Activated CD4-positive, alpha-beta T cell treated with anti-CD3 and anti-CD28 coated beads for 36 hours (primary cell): ENCODE measurements at regions of chr16 and their contacts with region 1.

Region 1: GRCh38 chr16:50806099-50807062 is 64.5 kb downstream of the CYLD start:
- DNase-seq: peak; percentile 91
- ATAC-seq: peak; percentile 94
- H3K4me3 Mint-ChIP-seq: peak overlapping the region; percentile 56
- H3K27ac Mint-ChIP-seq: peak overlapping the region; percentile 55
- H3K4me1 Mint-ChIP-seq: peaks cover 12% of the 10 kb centered on the region
- H3K27me3 Mint-ChIP-seq: no peaks in the 10 kb centered on the region

Region 2: GRCh38 chr16:49776085-49776595 is 1030.2 kb before region 1 on chr16:
- CTCF ChIA-PET with region 1: no interaction called
- POLR2A ChIA-PET with region 1: no interaction called
- intact Hi-C with region 1: no loop called
- DNase-seq: no peak
- ATAC-seq: no peak
- H3K4me3 Mint-ChIP-seq: no peak overlapping the region
- H3K27ac Mint-ChIP-seq: no peak overlapping the region
- H3K4me1 Mint-ChIP-seq: no peaks in the 10 kb centered on the region
- H3K27me3 Mint-ChIP-seq: no peaks in the 10 kb centered on the region

Region 3: GRCh38 chr16:50210266-50211038 is 595.9 kb before region 1 on chr16:
- CTCF ChIA-PET with region 1: interaction called, 16 read pairs
- POLR2A ChIA-PET with region 1: no interaction called
- intact Hi-C with region 1: loop called (anchors 1 kb)
- DNase-seq: peak; percentile 85
- ATAC-seq: peak; percentile 98
- H3K4me3 Mint-ChIP-seq: no peak overlapping the region
- H3K27ac Mint-ChIP-seq: peak overlapping the region; percentile 84
- H3K4me1 Mint-ChIP-seq: peaks cover 36% of the 10 kb centered on the region
- H3K27me3 Mint-ChIP-seq: no peaks in the 10 kb centered on the region

Region 4: GRCh38 chr16:50373780-50374179 is 432.6 kb before region 1 on chr16:
- CTCF ChIA-PET with region 1: interaction called, 8 read pairs
- POLR2A ChIA-PET with region 1: no interaction called
- intact Hi-C with region 1: loop called (anchors 1 to 5 kb)
- DNase-seq: no peak
- ATAC-seq: no peak
- H3K4me3 Mint-ChIP-seq: no peak overlapping the region
- H3K27ac Mint-ChIP-seq: no peak overlapping the region
- H3K4me1 Mint-ChIP-seq: peaks cover 8% of the 10 kb centered on the region
- H3K27me3 Mint-ChIP-seq: no peaks in the 10 kb centered on the region

Region 5: DNA sequence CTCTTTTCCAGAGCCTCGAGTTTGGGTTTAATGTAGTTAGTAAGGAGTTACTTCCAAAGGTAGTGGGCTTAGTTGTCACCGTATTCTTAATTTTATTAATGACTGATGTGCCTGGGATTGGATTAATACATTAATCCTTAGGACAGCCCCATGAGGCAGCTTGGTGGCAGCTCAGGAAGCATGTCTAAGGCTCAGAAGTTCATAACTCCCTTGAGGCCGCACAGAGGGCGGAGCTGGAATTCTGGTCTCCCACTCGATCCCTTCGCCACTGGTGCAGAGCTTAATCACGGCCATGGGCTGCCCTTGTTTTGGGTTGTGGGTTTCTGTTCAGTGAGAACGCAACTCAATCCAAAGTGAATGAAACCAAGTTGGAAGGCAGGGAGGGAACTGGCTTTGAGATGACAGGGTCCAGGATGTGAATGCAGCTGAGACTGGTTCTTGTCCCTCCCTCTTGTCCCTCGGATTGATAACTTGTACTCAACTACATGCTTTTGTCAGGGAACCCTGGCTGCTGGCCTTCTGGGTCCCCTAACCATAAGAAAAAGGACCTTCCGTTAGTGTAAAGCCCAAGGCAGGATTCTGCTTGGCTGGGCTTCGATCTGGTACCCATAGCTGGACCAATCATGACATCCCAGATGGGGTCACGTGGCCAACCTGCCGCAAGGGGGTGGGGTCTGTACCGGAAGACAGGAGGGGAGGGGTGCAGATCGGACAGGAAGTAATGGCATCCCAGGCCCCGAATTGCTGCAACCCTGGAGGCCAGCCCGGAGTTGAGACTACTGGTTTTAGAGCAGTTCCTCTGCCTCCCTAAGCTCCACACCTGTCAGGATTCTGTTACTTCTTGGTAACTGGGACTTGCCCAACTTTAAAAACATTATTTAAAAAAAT is 170.6 kb before region 1 on chr16:
- CTCF ChIA-PET with region 1: interaction called, 10 read pairs
- POLR2A ChIA-PET with region 1: no interaction called
- intact Hi-C with region 1: no loop called
- DNase-seq: peak; percentile 64
- ATAC-seq: peak; percentile 82
- H3K4me3 Mint-ChIP-seq: no peak overlapping the region
- H3K27ac Mint-ChIP-seq: peak overlapping the region; percentile 4
- H3K4me1 Mint-ChIP-seq: peaks cover 3% of the 10 kb centered on the region
- H3K27me3 Mint-ChIP-seq: no peaks in the 10 kb centered on the region

Region 6: GRCh38 chr16:50718061-50718760 is 88.2 kb before region 1 on chr16:
- CTCF ChIA-PET with region 1: interaction called, 11 read pairs
- POLR2A ChIA-PET with region 1: no interaction called
- intact Hi-C with region 1: no loop called
- DNase-seq: no peak
- ATAC-seq: no peak
- H3K4me3 Mint-ChIP-seq: no peak overlapping the region
- H3K27ac Mint-ChIP-seq: no peak overlapping the region
- H3K4me1 Mint-ChIP-seq: peaks cover 46% of the 10 kb centered on the region
- H3K27me3 Mint-ChIP-seq: no peaks in the 10 kb centered on the region

Region 7: DNA sequence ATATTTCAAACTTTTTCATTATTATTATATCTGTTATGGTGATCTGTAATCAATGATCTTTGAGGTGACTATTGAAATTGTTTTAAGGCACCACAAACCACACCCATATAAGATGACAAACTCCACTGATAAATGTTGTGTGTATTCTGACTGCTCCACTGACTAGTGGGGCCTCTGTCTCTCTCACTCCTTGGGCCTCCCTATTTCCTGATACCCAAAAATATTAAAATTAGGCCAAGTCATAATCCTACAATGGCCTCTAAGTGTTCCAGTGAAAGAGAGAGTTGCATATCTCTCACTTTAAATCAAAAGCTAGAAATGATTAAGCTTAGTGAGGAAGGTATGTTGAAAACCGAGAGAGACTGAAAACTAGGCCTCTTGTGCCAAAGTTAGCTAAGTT is 41.1 kb before region 1 on chr16:
- CTCF ChIA-PET with region 1: interaction called, 21 read pairs
- POLR2A ChIA-PET with region 1: no interaction called
- intact Hi-C with region 1: no loop called
- DNase-seq: no peak
- ATAC-seq: peak; percentile 84
- H3K4me3 Mint-ChIP-seq: peak overlapping the region; percentile 34
- H3K27ac Mint-ChIP-seq: peak overlapping the region; percentile 92
- H3K4me1 Mint-ChIP-seq: peaks cover 95% of the 10 kb centered on the region
- H3K27me3 Mint-ChIP-seq: no peaks in the 10 kb centered on the region